CD4-positive, alpha-beta memory T cell (primary cell): ENCODE measurements at regions of chr11 and their contacts with region 1.

Region 1: GRCh38 chr11:9613118-9613829 is 39.8 kb downstream of the WEE1 start:
- DNase-seq: peak; percentile 78 to 85 (median 79)
- H3K4me3 ChIP-seq: peak overlapping the region; percentile 40 to 67
- H3K4me3 Mint-ChIP-seq: peak overlapping the region; percentile 91 to 100 (median 97)
- H3K27ac ChIP-seq: peak overlapping the region; percentile 88
- H3K27ac Mint-ChIP-seq: peak overlapping the region; percentile 94 to 100 (median 98)
- H3K4me1 ChIP-seq: peaks cover 16% of the 10 kb centered on the region
- H3K4me1 Mint-ChIP-seq: peaks cover 12 to 20% (median 14%) of the 10 kb centered on the region in 4 donors
- H3K27me3 ChIP-seq: no peaks in the 10 kb centered on the region
- H3K27me3 Mint-ChIP-seq: no peaks in the 10 kb centered on the region

Region 2: DNA sequence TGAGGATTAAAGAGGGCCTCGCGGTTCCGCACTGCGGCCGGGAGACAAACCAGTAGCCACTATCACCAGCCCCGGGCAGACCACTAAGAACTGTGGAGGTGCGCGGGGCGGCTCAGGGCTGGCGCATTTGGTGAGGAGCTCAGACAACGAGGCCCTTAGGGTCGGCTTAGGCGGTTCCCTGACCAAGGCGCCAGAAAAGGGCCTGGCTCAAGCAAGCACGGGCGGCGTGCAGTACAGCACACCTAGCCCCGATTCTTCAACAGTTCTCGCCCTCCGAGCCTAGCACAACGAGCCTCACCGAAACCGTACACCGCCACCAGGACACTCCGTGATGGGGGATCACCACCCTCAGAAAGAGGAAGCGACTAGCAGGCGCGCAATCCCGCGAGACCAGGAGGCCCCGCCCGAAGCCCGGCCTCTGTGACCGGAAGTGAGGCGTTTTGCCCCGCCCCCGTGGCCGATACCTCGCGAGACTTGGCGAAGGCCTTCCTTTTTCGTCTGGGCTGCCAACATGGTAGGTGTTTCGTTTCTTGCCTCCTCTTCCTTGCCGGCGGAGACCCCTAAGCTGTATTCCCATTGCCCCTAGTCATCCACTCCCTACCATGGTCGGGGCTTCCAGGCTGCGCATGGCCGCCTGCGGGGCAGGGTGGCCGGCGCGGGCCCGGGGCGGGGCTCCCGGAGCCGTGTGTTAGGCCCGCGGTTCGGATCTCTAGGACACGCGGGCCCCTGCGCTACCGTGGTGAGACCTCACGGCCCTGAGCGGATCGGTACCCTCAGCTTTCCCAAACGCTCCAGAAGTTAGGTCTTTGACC is 930.8 kb before region 1 on chr11 and contains the starts of genes RPL27A and TRIM66:
- CTCF ChIA-PET with region 1: no interaction called
- POLR2A ChIA-PET with region 1: no interaction called
- intact Hi-C with region 1: loop called (anchors 5 kb)
- DNase-seq: peak; percentile 98 to 99 (median 98)
- H3K4me3 ChIP-seq: peak within 1 kb of the TSS; percentile 61 to 87
- H3K4me3 Mint-ChIP-seq: peak within 1 kb of the TSS; percentile 89 to 99 (median 96)
- H3K27ac ChIP-seq: peak within 1 kb of the TSS; percentile 96
- H3K27ac Mint-ChIP-seq: peak within 1 kb of the TSS; percentile 97 to 99 (median 98)
- H3K4me1 ChIP-seq: peaks cover 34% of the 10 kb centered on the region
- H3K4me1 Mint-ChIP-seq: peaks cover 28 to 72% (median 40%) of the 10 kb centered on the region in 4 donors
- H3K27me3 ChIP-seq: no peaks in the 10 kb centered on the region
- H3K27me3 Mint-ChIP-seq: no peaks in the 10 kb centered on the region
- total RNA-seq, gene RPL27A: 1,456 to 1,504 TPM
- total RNA-seq, gene TRIM66: 25.0 to 31.3 TPM

Region 3: DNA sequence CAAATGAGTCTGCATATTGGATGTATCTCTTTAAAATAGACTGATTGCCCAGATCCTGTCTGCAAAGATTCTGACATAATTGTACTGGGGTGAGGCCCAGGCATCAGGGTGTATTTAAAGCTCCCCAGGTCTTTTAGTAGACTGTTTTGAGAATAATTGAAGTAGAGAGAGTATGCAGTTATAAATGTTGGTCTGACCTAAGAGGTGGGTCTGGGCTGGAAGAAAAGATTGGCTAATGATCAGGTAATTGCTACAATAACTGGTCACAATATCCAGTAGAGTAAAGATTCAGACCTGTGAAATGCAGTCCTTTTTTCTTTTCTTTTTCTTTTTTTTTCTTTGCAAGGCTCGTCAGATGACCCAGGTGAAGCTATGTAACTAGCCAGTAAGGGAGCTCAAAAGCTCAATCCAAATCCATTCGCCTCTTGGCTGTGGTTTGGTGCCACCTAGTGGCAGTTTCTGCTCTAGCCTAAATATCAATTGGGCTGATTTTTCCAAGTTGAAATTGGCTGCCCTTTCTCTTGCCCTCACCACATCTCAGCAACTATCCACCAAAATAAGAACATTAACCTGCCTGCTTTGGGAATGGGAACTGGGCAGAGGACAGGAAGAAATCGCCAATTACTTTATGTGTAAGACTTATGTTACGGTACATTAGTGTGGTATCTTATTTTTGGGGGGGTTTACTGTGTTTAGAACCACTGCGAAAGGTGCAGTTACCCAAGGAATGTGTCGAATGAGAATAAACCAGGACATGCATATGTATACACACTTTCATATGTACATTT is 106.6 kb before region 1 on chr11:
- CTCF ChIA-PET with region 1: interaction called, 25 read pairs
- POLR2A ChIA-PET with region 1: no interaction called
- intact Hi-C with region 1: no loop called
- DNase-seq: peak; percentile 63 to 68 (median 65)
- H3K4me3 ChIP-seq: no peak overlapping the region
- H3K4me3 Mint-ChIP-seq: no peak overlapping the region
- H3K27ac ChIP-seq: no peak overlapping the region
- H3K27ac Mint-ChIP-seq: peak overlapping the region in 3 of 7 donors; percentile 62 to 73 (median 67)
- H3K4me1 ChIP-seq: peaks cover 10% of the 10 kb centered on the region
- H3K4me1 Mint-ChIP-seq: peaks cover 9 to 18% (median 12%) of the 10 kb centered on the region in 4 donors
- H3K27me3 ChIP-seq: no peaks in the 10 kb centered on the region
- H3K27me3 Mint-ChIP-seq: no peaks in the 10 kb centered on the region

Region 4: GRCh38 chr11:9565822-9566560 is 47.3 kb before region 1 on chr11:
- CTCF ChIA-PET with region 1: interaction called, 34 read pairs
- POLR2A ChIA-PET with region 1: interaction called, 7 read pairs
- intact Hi-C with region 1: no loop called
- DNase-seq: peak; percentile 34 to 85 (median 42)
- H3K4me3 ChIP-seq: no peak overlapping the region
- H3K4me3 Mint-ChIP-seq: peak overlapping the region in 3 of 8 donors; percentile 3 to 59 (median 18)
- H3K27ac ChIP-seq: no peak overlapping the region
- H3K27ac Mint-ChIP-seq: peak overlapping the region; percentile 5 to 87 (median 78)
- H3K4me1 ChIP-seq: peaks cover 25% of the 10 kb centered on the region
- H3K4me1 Mint-ChIP-seq: peaks cover 17 to 34% (median 21%) of the 10 kb centered on the region in 4 donors
- H3K27me3 ChIP-seq: no peaks in the 10 kb centered on the region
- H3K27me3 Mint-ChIP-seq: no peaks in the 10 kb centered on the region

Region 5: GRCh38 chr11:9663699-9664275 is 50.5 kb after region 1 on chr11 and contains the start of gene SWAP70:
- CTCF ChIA-PET with region 1: interaction called, 3 read pairs
- POLR2A ChIA-PET with region 1: no interaction called
- intact Hi-C with region 1: loop called (anchors 1 kb)
- DNase-seq: peak; percentile 56 to 71 (median 60)
- H3K4me3 ChIP-seq: peak within 1 kb of the TSS; percentile 72 to 87
- H3K4me3 Mint-ChIP-seq: peak within 1 kb of the TSS; percentile 88 to 93 (median 90)
- H3K27ac ChIP-seq: peak within 1 kb of the TSS; percentile 25
- H3K27ac Mint-ChIP-seq: peak within 1 kb of the TSS; percentile 5 to 85 (median 65)
- H3K4me1 ChIP-seq: peaks cover 12% of the 10 kb centered on the region
- H3K4me1 Mint-ChIP-seq: peaks cover 8 to 22% (median 13%) of the 10 kb centered on the region in 4 donors
- H3K27me3 ChIP-seq: no peaks in the 10 kb centered on the region
- H3K27me3 Mint-ChIP-seq: peaks cover 24% of the 10 kb centered on the region in 2 donors
- total RNA-seq, gene SWAP70: 4.7 to 5.2 TPM

Region 6: DNA sequence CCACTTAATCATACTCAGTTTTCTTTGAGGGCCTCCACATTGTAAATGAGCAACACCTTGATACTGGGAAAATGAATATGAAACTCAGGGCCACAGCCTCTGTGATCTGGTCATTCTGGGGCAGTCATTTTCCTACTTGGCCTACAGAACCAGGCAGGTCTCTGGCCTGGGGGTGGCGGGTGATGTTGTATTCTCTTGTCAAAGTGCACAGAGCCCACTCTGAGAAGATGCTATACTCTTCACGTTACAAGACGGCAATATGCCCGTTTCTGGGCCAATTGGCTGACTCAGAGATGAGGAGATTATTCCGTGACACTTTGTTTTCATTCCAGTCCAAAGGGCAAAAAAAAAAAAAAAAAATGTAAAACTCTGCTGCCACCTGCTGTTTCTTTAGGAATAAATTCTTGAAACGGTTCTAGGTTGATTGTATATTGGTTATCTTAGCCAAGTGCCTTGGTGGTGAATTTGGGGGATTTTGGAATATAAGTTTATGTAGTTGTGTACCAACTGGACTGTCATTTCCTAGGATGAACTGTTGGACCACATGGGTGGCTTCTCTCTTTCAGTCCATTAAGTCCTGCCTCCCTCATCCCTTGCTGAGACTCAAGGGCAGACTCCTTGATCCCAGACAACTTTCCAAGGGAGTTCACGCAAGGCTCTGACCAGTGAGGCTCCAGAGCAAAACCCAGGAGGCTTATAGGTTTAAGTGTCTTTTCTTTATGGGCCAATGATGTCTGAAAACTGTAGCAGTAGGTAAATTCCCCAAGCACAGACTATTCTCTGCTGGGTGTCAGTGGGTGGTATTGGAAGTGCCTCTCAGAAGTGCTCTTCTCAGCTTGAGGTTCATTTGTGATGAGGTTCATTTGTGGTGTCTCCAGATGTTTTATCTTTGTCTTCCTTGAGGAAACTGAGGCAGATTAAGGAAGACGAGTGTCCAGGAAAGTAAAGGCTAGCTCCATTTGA is 709.8 kb after region 1 on chr11:
- CTCF ChIA-PET with region 1: no interaction called
- POLR2A ChIA-PET with region 1: no interaction called
- intact Hi-C with region 1: loop called (anchors 1 kb)
- DNase-seq: peak; percentile 48 to 81 (median 50)
- H3K4me3 ChIP-seq: no peak overlapping the region
- H3K4me3 Mint-ChIP-seq: peak overlapping the region in 2 of 8 donors; percentile 3 to 18
- H3K27ac ChIP-seq: no peak overlapping the region
- H3K27ac Mint-ChIP-seq: peak overlapping the region in 3 of 7 donors; percentile 46 to 76 (median 64)
- H3K4me1 ChIP-seq: peaks cover 5% of the 10 kb centered on the region
- H3K4me1 Mint-ChIP-seq: peaks cover 0 to 2% (median under 1%) of the 10 kb centered on the region in 4 donors
- H3K27me3 ChIP-seq: peaks cover 4% of the 10 kb centered on the region
- H3K27me3 Mint-ChIP-seq: peaks cover 8 to 15% of the 10 kb centered on the region in 2 donors